ENCODE measurements at regions of chr3 and their contacts with region 1.

Region 1: GRCh38 chr3:101779047-101779821 is at the start of gene NXPE3:
- DNase-seq: peak; percentile 92 to 97 (median 94)
- ATAC-seq: peak; percentile 95
- H3K4me3 ChIP-seq: peak within 1 kb of the TSS; percentile 60
- H3K4me3 Mint-ChIP-seq: peak within 1 kb of the TSS; percentile 89 to 99 (median 94)
- H3K27ac ChIP-seq: peak within 1 kb of the TSS; percentile 88
- H3K27ac Mint-ChIP-seq: peak within 1 kb of the TSS; percentile 93 to 100 (median 99)
- H3K4me1 ChIP-seq: peaks cover 27% of the 10 kb centered on the region in 2 donors
- H3K4me1 Mint-ChIP-seq: peaks cover 20 to 61% (median 53%) of the 10 kb centered on the region in 7 donors
- H3K27me3 ChIP-seq: no peaks in the 10 kb centered on the region
- H3K27me3 Mint-ChIP-seq: no peaks in the 10 kb centered on the region
- total RNA-seq, gene NXPE3: 25.9 to 48.7 (median 35.5) TPM

Region 2: GRCh38 chr3:101512646-101513418 is 266.4 kb before region 1 on chr3 and contains the start of gene SENP7:
- CTCF ChIA-PET with region 1: no interaction called
- POLR2A ChIA-PET with region 1: no interaction called
- intact Hi-C with region 1: loop called in 1 of 2 experiments (anchors 2 kb)
- DNase-seq: peak; percentile 55 to 82 (median 76)
- ATAC-seq: peak; percentile 74
- H3K4me3 ChIP-seq: peak within 1 kb of the TSS; percentile 84
- H3K4me3 Mint-ChIP-seq: peak within 1 kb of the TSS; percentile 98 to 100 (median 100)
- H3K27ac ChIP-seq: peak within 1 kb of the TSS; percentile 92
- H3K27ac Mint-ChIP-seq: peak within 1 kb of the TSS; percentile 96 to 100 (median 98)
- H3K4me1 ChIP-seq: peaks cover 24 to 41% of the 10 kb centered on the region in 2 donors
- H3K4me1 Mint-ChIP-seq: peaks cover 35 to 79% (median 70%) of the 10 kb centered on the region in 7 donors
- H3K27me3 ChIP-seq: no peaks in the 10 kb centered on the region
- H3K27me3 Mint-ChIP-seq: peaks cover 0 to 4% (median 0%) of the 10 kb centered on the region in 5 donors
- total RNA-seq, gene SENP7: 28.8 to 79.0 (median 49.5) TPM

Region 3: DNA sequence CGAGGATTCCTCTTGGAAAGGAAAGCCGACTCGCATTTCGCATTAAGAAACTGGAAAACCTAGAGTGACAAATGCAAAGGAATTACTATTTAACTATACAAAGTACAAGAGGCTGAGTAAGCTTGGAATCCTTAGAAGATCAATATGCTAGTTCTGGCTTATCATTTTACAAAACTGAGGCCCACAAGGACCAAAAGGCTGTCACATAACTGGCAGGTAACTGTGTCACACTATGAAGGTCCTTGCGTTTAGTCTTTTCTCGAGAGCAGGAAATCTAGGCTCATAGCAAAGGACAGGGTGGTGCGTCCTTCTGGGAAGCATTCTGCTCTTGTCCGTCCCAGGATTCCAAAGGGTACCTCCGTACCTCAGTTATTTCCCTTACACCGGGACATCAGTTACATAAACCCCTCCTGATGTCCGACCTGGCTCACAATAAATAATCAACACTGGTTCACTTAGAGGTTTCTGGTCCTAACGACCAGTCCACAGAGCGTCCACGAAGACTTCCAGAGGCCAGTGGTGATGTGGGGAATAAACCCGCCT is 93.3 kb before region 1 on chr3:
- CTCF ChIA-PET with region 1: no interaction called
- POLR2A ChIA-PET with region 1: interaction called, 11 read pairs
- intact Hi-C with region 1: loop called in 1 of 2 experiments (anchors 2 kb)
- DNase-seq: peak in 2 of 9 donors; percentile 21 to 24
- ATAC-seq: peak; percentile 1
- H3K4me3 ChIP-seq: peak overlapping the region; percentile 72
- H3K4me3 Mint-ChIP-seq: peak overlapping the region; percentile 90 to 100 (median 98)
- H3K27ac ChIP-seq: peak overlapping the region; percentile 92
- H3K27ac Mint-ChIP-seq: peak overlapping the region; percentile 94 to 100 (median 99)
- H3K4me1 ChIP-seq: peaks cover 24 to 25% of the 10 kb centered on the region in 2 donors
- H3K4me1 Mint-ChIP-seq: peaks cover 20 to 58% (median 41%) of the 10 kb centered on the region in 7 donors
- H3K27me3 ChIP-seq: no peaks in the 10 kb centered on the region
- H3K27me3 Mint-ChIP-seq: no peaks in the 10 kb centered on the region

Region 4: GRCh38 chr3:101762041-101762646 is 17.1 kb before region 1 on chr3:
- CTCF ChIA-PET with region 1: no interaction called
- POLR2A ChIA-PET with region 1: interaction called, 23 read pairs
- intact Hi-C with region 1: loop called in 1 of 2 experiments (anchors 1 kb)
- DNase-seq: no peak
- ATAC-seq: no peak
- H3K4me3 ChIP-seq: no peak overlapping the region
- H3K4me3 Mint-ChIP-seq: no peak overlapping the region
- H3K27ac ChIP-seq: no peak overlapping the region
- H3K27ac Mint-ChIP-seq: no peak overlapping the region
- H3K4me1 ChIP-seq: peaks cover 0 to 4% of the 10 kb centered on the region in 2 donors
- H3K4me1 Mint-ChIP-seq: peaks cover 9 to 23% (median 14%) of the 10 kb centered on the region in 7 donors
- H3K27me3 ChIP-seq: no peaks in the 10 kb centered on the region
- H3K27me3 Mint-ChIP-seq: no peaks in the 10 kb centered on the region

Region 5: DNA sequence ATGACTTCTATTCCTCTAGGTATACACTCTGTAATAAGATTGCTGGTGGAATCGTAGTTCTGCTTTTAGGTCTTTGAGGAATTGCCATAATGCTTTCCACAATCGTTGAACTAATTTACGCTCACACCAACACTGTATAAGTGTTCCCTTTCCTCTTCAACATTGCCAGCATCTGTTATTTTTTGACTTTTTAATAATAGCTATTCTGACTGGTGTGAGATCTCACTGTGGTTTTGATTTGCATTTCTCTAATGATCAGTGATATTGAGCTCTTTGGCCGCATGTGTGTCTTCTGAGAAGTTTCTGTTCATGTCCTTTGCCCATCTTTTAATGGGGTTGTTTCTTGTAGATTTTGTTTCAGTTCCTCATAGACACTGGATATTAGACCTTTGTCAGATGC is 12.5 kb after region 1 on chr3:
- CTCF ChIA-PET with region 1: interaction called, 4 read pairs
- POLR2A ChIA-PET with region 1: interaction called, 13 read pairs
- intact Hi-C with region 1: no loop called
- DNase-seq: no peak
- ATAC-seq: no peak
- H3K4me3 ChIP-seq: no peak overlapping the region
- H3K4me3 Mint-ChIP-seq: peak overlapping the region in 6 of 10 donors; percentile 38 to 71 (median 60)
- H3K27ac ChIP-seq: no peak overlapping the region
- H3K27ac Mint-ChIP-seq: peak overlapping the region in 8 of 9 donors; percentile 67 to 88 (median 82)
- H3K4me1 ChIP-seq: peaks cover 0 to 35% of the 10 kb centered on the region in 2 donors
- H3K4me1 Mint-ChIP-seq: peaks cover 34 to 97% (median 89%) of the 10 kb centered on the region in 7 donors
- H3K27me3 ChIP-seq: no peaks in the 10 kb centered on the region
- H3K27me3 Mint-ChIP-seq: no peaks in the 10 kb centered on the region

Region 6: DNA sequence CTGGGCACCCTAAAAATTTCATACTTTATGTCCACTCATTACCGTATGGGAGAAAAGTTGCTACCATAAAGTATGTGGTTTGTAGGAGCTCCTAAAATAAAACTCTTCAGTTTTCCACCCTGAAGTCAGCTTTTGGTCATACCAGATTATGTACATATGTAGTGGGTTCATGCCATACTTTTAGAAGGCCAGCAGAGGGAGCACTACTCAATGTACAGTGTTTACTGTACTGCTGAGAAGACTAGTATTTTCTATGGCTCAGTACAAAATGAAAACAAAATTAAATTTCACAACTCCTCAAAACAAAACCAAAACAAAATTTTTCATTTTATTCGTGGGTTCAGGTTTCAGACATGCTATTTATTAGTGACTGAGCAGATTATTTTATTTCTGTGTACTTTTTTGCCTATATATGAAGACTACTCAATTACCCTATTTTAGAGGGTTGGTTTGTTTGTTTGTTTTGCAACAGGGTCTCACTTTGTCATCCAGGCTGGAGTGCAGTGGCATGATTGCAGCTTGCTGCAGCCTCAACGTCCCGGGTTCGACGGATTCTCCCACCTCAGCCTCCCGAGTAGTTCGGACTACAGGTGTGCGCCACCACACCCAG is 24.0 kb after region 1 on chr3:
- CTCF ChIA-PET with region 1: interaction called, 5 read pairs
- POLR2A ChIA-PET with region 1: interaction called, 22 read pairs
- intact Hi-C with region 1: loop called in 1 of 2 experiments (anchors 1 kb)
- DNase-seq: peak in 7 of 9 donors; percentile 59 to 78 (median 69)
- ATAC-seq: peak; percentile 100
- H3K4me3 ChIP-seq: no peak overlapping the region
- H3K4me3 Mint-ChIP-seq: peak overlapping the region in 6 of 10 donors; percentile 14 to 58 (median 29)
- H3K27ac ChIP-seq: peak overlapping the region; percentile 29
- H3K27ac Mint-ChIP-seq: peak overlapping the region; percentile 53 to 95 (median 68)
- H3K4me1 ChIP-seq: peaks cover 0 to 6% of the 10 kb centered on the region in 2 donors
- H3K4me1 Mint-ChIP-seq: peaks cover 10 to 67% (median 55%) of the 10 kb centered on the region in 7 donors
- H3K27me3 ChIP-seq: no peaks in the 10 kb centered on the region
- H3K27me3 Mint-ChIP-seq: no peaks in the 10 kb centered on the region

Region 7: DNA sequence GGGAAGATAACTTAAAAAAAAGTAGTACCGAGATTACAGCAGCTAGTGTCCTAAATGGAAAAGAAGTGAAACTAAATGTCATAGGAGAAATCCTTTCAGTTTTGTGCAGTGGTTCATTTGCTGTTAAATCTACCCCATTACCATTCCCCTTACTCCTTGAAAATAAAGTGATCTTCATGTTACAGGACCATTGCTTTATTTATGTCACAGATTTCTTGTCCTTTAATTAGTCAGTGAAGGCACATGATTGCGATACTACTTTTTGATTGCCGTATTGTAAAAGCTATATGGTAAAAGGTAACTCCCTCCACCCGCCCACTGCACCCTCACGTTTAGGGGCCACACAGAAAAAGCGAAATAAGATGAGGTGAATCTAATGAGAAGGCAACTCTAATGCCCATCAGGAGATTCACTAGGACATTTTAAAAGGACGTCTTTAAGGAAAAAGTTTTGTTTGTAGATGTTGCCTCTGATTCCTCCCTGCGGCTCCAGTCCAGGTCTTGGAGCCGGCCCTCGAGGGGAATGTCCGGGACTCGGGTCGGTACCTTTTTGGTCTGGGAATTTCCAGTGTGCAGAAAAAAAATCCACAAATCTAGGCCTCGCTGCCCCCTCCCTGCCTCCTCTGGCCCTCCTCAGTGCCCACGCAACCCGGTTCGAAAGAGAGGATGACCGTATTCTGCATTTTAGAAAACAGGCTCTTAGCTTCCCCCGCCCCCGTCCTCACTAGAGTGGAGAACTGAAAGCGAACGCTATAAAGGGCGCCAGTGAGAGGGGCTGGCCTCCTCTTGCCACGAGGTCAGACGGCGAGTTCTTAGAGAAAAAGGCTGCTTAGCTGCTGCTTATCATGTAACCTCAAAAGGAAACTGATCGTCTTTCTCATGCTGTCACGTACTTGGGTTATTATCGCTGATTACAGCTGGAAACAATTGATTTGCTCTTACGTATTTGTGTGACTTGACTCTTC is 48.3 kb after region 1 on chr3:
- CTCF ChIA-PET with region 1: no interaction called
- POLR2A ChIA-PET with region 1: interaction called, 4 read pairs
- intact Hi-C with region 1: loop called in 1 of 2 experiments (anchors 2 kb)
- DNase-seq: peak; percentile 52 to 86 (median 73)
- ATAC-seq: peak; percentile 86
- H3K4me3 ChIP-seq: peak overlapping the region; percentile 66
- H3K4me3 Mint-ChIP-seq: peak overlapping the region; percentile 85 to 97 (median 95)
- H3K27ac ChIP-seq: peak overlapping the region; percentile 88
- H3K27ac Mint-ChIP-seq: peak overlapping the region; percentile 94 to 99 (median 97)
- H3K4me1 ChIP-seq: peaks cover 13 to 28% of the 10 kb centered on the region in 2 donors
- H3K4me1 Mint-ChIP-seq: peaks cover 31 to 76% (median 63%) of the 10 kb centered on the region in 7 donors
- H3K27me3 ChIP-seq: no peaks in the 10 kb centered on the region
- H3K27me3 Mint-ChIP-seq: no peaks in the 10 kb centered on the region

Region 8: DNA sequence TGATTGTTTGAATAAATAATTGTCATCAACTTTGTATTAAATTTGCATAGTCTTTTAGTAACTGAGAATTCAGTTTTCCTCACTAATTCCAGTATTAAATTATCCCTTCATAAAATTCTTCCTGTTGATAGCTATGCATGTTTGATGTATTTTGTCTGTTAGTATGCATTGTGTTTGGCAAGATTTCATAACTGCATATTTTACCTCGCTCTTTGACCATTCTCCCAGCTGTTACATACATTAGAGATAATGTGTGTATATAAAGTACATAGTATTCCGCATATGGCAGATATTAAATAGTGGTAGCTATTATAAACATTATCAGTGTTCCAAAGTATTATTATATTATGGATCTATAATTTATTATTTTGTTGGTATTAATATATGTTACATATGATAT is 59.5 kb after region 1 on chr3:
- CTCF ChIA-PET with region 1: no interaction called
- POLR2A ChIA-PET with region 1: no interaction called
- intact Hi-C with region 1: no loop called
- DNase-seq: no peak
- ATAC-seq: no peak
- H3K4me3 ChIP-seq: no peak overlapping the region
- H3K4me3 Mint-ChIP-seq: no peak overlapping the region
- H3K27ac ChIP-seq: no peak overlapping the region
- H3K27ac Mint-ChIP-seq: no peak overlapping the region
- H3K4me1 ChIP-seq: peaks cover 0 to 7% of the 10 kb centered on the region in 2 donors
- H3K4me1 Mint-ChIP-seq: peaks cover 31 to 50% (median 35%) of the 10 kb centered on the region in 7 donors
- H3K27me3 ChIP-seq: no peaks in the 10 kb centered on the region
- H3K27me3 Mint-ChIP-seq: no peaks in the 10 kb centered on the region

Measured in naive thymus-derived CD4-positive, alpha-beta T cell (primary cell).